ENCODE measurements at regions of chr19 and their contacts with region 1.

Region 1: GRCh38 chr19:40716655-40717324 is at the starts of genes COQ8B and ITPKC:
- DNase-seq: peak; percentile 100
- total RNA-seq, gene COQ8B: 21.5 to 29.9 TPM
- total RNA-seq, gene ITPKC: 18.9 to 19.4 TPM

Region 2: DNA sequence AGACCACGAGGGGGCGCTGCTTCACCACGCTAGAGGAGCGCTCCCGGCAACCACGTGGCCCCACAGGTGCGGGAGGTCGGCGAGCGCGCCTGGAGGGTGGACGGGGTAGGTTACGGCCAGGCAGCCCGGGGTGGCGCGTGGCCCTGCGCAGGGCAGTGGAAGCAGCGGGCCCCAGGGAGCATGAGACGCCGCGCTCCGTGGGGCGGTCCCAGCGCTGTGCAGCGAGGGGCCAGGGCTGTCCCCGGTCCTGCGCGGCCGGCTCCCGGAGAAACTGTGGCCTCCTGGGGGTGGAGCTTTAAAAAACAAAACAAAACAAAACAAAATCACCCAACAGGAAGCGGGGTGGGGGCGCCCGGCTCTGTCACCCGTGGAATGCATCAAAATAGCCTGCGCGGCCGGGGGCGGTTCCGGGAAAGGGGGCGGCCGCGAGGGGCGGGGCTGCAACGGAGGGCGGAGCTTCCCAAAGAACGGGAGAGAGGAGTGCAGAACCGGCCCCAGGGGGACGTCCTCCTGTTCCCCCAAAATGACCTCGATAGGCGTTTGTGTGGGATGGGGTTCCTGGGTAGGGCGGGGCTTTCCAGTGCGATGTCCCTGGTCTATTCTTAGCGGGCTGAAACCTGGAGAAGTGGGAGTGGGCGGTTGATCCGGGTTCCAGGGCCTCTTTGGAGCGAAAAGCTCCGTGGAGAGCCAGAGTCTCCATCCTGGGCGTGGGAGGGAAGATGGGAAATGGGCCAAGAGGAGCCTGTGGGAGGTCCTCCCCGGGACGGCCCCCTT is 53.7 kb before region 1 on chr19:
- intact Hi-C with region 1: no loop called
- DNase-seq: peak; percentile 97

Region 3: DNA sequence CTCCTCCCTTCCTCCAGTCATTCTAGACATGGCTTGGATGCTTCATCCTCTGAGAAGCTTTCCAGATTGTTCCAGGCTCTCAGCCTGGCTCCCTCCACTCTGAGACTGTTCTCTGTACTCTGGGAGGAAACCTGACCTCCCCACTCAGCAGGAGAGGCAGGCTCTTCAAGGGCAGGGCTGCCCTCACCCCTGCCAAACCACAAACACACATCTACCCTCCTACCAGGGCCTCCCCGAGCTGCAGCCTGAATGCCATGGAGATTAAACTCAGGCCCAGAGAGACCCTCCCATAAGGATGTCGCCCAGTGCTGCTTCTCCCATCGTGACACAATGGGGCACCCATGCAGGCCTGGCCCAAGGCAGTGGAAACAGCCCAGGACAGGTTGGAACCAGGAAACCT is 42.5 kb before region 1 on chr19:
- intact Hi-C with region 1: no loop called
- DNase-seq: no peak

Region 4: DNA sequence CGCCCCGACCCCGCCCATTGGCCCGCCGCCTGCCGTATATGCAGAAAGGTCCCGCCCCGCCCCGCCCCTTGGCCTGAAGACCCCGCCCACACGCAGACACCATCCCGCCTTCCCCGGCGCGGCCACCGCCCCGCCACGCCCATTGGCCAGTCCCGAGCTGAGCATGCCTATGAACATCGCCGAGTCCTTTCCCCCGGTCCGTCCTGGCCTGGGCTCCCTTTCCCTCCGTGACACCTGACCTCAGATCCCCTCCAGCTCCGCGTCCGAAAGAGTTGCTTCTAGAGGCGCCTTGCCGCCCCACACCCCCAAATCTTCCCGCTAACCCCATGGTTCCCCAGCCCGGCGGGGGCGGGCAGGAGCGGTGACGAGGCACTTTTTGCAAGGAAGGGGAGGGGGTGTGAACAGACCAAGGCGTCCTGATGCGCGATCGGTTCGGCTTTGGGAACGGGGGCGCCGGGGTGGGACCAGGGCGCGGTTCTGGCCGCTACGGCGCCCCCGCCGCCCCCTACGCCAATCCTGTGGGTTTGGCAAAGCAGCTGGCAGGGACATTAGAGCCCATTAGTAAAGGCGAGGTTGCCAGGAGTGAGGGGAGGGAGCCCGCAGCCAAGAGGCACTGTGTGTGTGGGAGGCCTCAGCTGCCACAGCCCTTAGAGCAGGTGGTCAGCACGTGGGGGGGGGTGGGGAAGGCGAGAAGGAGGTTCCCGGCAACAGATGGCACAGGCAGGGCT is 25.9 kb before region 1 on chr19:
- intact Hi-C with region 1: loop called in 1 of 2 experiments (anchors 2 kb)
- DNase-seq: peak; percentile 98

Region 5: GRCh38 chr19:40750059-40750873 is 33.5 kb after region 1 on chr19 and contains the start of gene ACTMAP:
- intact Hi-C with region 1: loop called in 1 of 2 experiments (anchors 5 kb)
- DNase-seq: peak; percentile 100
- total RNA-seq, gene ACTMAP: 3.0 to 5.5 TPM

Region 6: GRCh38 chr19:40762754-40763470 is 46.1 kb after region 1 on chr19:
- intact Hi-C with region 1: no loop called
- DNase-seq: no peak